ENCODE measurements at regions of chr20 and their contacts with region 1.

Region 1: GRCh38 chr20:13231031-13231752 is 10.1 kb downstream of the ISM1 start:
- DNase-seq: peak; percentile 56
- ATAC-seq: peak; percentile 79
- H3K4me3 Mint-ChIP-seq: peak overlapping the region; percentile 6
- H3K27ac Mint-ChIP-seq: peak overlapping the region; percentile 75
- H3K4me1 Mint-ChIP-seq: peaks cover 41% of the 10 kb centered on the region
- H3K27me3 Mint-ChIP-seq: no peaks in the 10 kb centered on the region

Region 2: DNA sequence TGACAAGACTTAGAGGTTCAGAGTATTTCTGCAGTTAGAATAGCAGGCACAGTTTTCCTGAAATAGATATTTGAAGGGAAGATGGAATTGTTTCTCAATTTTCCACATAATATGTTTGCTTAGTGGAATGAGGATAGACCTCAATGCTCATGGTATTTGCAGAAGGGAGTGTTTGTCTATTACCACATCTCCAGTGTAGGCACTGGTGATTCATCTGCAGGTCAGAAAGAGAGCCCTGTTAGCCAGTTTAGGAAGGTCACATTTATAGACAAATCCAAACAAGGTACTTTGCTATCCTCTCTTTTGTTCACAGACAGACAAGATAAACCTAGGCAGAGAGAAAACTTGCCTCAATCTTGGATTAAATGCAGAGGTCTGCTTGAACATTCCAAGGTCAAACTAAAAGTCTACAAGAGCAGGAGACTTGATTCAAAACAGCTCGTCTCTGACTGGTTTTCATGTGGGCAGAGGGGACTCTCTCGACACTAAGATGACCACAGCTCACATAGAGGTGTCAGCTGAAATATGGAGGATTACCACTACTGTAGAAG is 12.7 kb after region 1 on chr20:
- CTCF ChIA-PET with region 1: interaction called, 11 read pairs
- POLR2A ChIA-PET with region 1: interaction called, 6 read pairs
- intact Hi-C with region 1: loop called (anchors 1 kb)
- DNase-seq: no peak
- ATAC-seq: no peak
- H3K4me3 Mint-ChIP-seq: no peak overlapping the region
- H3K27ac Mint-ChIP-seq: no peak overlapping the region
- H3K4me1 Mint-ChIP-seq: peaks cover 37% of the 10 kb centered on the region
- H3K27me3 Mint-ChIP-seq: no peaks in the 10 kb centered on the region

Region 3: DNA sequence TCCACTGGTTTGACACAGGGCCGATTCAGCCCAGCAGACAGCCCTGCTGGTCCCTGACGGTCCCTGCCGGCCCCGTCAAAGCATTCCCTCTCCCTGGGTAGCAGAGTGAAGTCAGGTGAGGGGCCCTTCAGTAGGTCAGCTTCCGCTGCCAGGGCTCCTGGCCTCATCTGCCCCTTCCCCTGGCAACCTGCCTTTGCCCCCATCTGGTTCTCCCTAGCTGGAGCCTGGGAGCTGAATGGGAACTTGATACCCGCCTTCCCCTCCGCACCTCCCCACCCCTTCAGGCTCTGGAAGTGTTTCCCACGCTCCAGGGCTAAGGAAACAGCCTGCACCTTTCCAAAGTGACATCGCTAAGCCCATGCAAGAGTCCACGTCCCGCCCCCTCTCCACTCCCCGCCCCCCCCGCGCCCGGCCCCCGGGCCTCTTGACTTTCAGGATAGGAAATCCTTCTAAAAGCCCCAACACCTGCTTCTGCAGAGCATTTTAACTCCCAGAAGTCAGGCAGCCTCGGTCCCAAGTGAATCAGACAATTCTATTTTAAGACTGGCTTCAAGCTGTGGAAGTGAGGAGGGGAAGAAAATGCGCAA is 43.2 kb after region 1 on chr20:
- CTCF ChIA-PET with region 1: no interaction called
- POLR2A ChIA-PET with region 1: no interaction called
- intact Hi-C with region 1: no loop called
- DNase-seq: no peak
- ATAC-seq: no peak
- H3K4me3 Mint-ChIP-seq: no peak overlapping the region
- H3K27ac Mint-ChIP-seq: no peak overlapping the region
- H3K4me1 Mint-ChIP-seq: no peaks in the 10 kb centered on the region
- H3K27me3 Mint-ChIP-seq: no peaks in the 10 kb centered on the region

Region 4: DNA sequence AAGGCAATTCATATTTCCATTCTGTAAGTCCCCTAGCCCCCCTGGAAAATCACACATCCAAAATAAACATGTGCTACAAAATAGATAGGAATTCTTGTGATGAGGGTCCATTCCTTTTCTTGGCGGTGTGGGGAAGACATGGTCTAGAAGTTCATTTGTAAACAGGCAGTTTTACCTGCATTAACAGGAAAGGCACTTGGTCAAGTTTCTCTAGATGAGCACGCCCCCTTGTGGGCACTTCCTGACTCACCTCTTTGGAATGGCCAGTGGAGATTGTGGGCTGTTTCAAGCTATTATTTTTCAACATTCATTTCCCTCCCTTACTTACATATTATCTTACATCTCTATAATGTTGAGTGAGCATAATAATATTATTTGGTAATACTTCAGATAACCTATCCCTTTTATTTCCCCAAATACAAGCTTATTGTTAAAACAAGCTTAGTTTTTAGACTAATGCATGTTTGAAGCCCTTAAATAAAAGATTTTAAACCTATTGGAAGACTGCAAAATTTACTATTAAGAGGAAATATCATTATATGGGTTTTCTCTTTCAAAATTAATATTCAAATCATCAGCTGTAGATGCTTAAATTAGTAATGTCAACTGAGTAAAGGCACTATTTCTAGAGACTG is 315.4 kb after region 1 on chr20:
- CTCF ChIA-PET with region 1: no interaction called
- POLR2A ChIA-PET with region 1: no interaction called
- intact Hi-C with region 1: no loop called
- DNase-seq: peak; percentile 85
- ATAC-seq: no peak
- H3K4me3 Mint-ChIP-seq: no peak overlapping the region
- H3K27ac Mint-ChIP-seq: no peak overlapping the region
- H3K4me1 Mint-ChIP-seq: no peaks in the 10 kb centered on the region
- H3K27me3 Mint-ChIP-seq: no peaks in the 10 kb centered on the region

Region 5: GRCh38 chr20:13953227-13953626 is 722.0 kb after region 1 on chr20:
- CTCF ChIA-PET with region 1: no interaction called
- POLR2A ChIA-PET with region 1: no interaction called
- intact Hi-C with region 1: no loop called
- DNase-seq: peak; percentile 5
- ATAC-seq: no peak
- H3K4me3 Mint-ChIP-seq: no peak overlapping the region
- H3K27ac Mint-ChIP-seq: no peak overlapping the region
- H3K4me1 Mint-ChIP-seq: no peaks in the 10 kb centered on the region
- H3K27me3 Mint-ChIP-seq: peaks cover 1% of the 10 kb centered on the region

Measured in activated CD4-positive, alpha-beta T cell treated with anti-CD3 and anti-CD28 coated beads for 36 hours (primary cell).